Activated T-helper 1 cell treated with anti-CD3 and anti-CD28 coated beads, Interleukin-12 subunit alpha, Interleukin-12 subunit beta, Interleukin-2, Interleukin-4 antibody, amounts not matched to agents 30 ng/mL and 10 ng/mL and 1 ng/mL, durations not matched to agents 14 hours and 24 hours and 36 hours (primary cell): ENCODE measurements at regions of chr16 and their contacts with region 1.

Region 1: DNA sequence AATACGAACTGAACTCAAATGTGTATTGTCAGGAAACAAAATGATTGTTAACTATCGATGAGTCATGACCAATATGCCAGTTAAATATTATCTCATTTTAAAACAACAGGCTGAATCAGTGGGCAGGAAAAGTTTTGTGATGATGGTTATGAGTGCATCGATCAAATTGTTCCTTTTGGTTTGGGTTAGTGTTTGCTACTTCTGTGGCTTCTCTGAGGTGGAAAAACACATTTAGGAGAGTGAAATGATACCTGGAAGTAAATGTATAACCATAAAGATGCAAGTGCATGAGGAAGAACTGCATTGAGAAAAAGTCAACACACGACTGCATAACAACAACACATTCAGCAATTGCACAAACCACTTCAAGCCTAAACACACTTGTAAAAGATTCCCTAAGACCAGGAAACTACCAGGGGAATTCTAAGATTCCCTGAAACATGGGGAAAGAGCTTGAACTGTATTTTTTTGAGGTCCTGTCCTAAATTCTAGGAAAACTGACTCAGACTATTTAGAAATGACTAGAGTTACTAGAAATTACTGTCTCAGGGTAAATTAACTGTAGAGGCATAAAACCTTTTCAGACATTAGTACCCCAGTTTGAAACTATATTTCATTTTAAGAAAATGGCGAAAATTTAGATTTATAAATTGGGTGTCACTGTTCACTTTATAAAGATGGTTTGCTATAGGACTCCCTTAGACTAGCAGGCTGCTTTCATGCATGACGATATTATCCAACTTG is 44.8 kb downstream of the CDYL2 start:
- DNase-seq: no peak
- H3K4me3 Mint-ChIP-seq: peak overlapping the region; percentile 23
- H3K27ac Mint-ChIP-seq: peak overlapping the region; percentile 67
- H3K4me1 Mint-ChIP-seq: peaks cover 44% of the 10 kb centered on the region
- H3K27me3 Mint-ChIP-seq: no peaks in the 10 kb centered on the region

Region 2: DNA sequence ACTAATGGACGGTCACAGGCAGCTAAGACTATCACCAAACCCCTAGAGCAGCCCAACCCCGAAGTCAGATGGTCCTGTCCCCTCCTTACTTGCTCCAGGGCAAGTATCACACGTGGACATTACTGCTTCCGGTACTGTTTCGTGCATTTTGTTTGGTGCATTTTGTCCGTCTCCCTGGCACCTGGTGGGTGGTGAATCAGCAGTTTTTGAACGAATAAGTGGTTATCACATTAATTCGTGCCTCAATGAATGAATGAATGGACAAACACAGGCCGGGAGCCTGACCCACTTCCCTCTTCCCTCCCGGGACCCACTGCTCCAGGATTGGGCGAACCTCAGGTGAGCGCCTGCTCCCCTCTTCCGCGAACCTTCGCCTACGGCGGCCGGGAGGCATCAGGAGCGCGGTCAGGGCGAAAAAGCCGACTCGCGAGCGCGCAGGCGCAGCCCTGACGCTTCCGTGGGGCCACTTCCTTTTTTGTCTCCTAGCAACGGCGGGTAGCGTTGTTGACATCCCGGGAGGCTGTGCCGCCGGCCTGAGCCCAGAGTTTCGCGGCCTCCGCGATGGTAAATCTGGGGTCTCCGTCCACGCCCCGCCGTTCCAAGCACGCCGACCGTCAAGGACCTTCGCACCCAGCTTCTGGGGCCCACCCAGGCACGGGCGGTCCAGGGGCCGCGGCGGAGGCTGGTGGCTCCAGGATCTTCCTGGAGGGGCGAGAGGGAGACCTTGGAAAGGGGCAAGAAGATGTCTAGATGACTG is 218.9 kb before region 1 on chr16 and contains the start of gene DYNLRB2:
- intact Hi-C with region 1: loop called (anchors 1 kb)
- DNase-seq: peak; percentile 92
- H3K4me3 Mint-ChIP-seq: peak within 1 kb of the TSS; percentile 87
- H3K27ac Mint-ChIP-seq: peak within 1 kb of the TSS; percentile 96
- H3K4me1 Mint-ChIP-seq: peaks cover 38% of the 10 kb centered on the region
- H3K27me3 Mint-ChIP-seq: peaks cover 2% of the 10 kb centered on the region
- total RNA-seq, gene DYNLRB2: not detected in 2 replicates

Region 3: DNA sequence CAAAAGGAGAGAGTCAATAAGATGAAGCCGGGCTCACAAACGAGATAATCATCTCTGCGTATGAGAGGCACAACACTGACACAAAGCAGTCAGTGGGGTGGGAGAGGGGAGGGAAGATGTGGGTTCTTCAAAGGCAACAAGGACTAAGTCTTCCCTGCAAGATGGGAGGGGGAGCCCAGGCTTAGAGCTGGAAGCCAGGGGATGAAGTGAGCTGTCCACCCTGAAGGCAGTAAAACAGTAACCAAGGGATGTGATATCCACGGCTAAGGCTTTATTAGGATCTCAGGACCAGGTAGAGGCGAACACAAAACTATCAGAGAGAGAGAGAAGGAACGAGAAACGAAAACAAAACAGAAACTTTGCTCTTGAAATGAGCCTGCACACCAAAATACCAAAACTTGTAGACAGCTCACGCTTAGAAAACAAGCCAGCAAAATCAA is 102.9 kb before region 1 on chr16:
- intact Hi-C with region 1: loop called (anchors 1 kb)
- DNase-seq: peak; percentile 42
- H3K4me3 Mint-ChIP-seq: peak overlapping the region; percentile 85
- H3K27ac Mint-ChIP-seq: peak overlapping the region; percentile 91
- H3K4me1 Mint-ChIP-seq: peaks cover 43% of the 10 kb centered on the region
- H3K27me3 Mint-ChIP-seq: no peaks in the 10 kb centered on the region

Region 4: GRCh38 chr16:80693553-80693952 is 66.0 kb before region 1 on chr16:
- intact Hi-C with region 1: loop called (anchors 1 kb)
- DNase-seq: no peak
- H3K4me3 Mint-ChIP-seq: no peak overlapping the region
- H3K27ac Mint-ChIP-seq: peak overlapping the region; percentile 71
- H3K4me1 Mint-ChIP-seq: peaks cover 83% of the 10 kb centered on the region
- H3K27me3 Mint-ChIP-seq: peaks cover 1% of the 10 kb centered on the region

Region 5: DNA sequence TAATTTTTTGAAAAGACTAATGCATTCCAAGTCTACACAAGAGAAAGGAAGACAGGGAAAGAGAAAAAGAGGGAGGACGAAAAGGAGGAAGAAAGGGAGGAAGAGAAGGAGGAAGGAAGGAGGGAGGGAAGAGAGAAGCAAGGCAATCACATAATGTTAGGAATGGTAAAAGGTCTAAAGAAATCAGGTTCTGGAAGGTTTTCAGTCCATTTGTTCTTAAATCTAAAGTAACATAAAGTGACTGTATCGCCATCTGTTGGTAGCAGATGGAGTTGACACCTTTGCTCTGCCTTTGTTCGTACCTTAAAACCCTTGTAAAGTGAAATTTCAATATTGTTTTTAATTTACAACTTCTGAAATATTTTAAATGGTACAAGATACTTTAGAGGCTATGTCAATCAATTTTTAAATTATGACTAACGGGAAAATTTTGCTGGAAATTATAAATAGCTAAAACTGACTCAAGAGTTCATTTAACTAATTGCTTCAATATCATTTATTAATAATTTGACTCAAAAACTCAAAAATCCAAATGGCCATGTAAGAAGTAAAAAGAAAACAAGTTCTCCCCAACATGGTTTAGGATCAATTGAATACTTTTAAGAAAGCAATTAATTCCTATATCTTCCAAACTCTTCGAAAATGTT is 65.2 kb after region 1 on chr16:
- intact Hi-C with region 1: loop called (anchors 5 kb)
- DNase-seq: no peak
- H3K4me3 Mint-ChIP-seq: no peak overlapping the region
- H3K27ac Mint-ChIP-seq: no peak overlapping the region
- H3K4me1 Mint-ChIP-seq: peaks cover 7% of the 10 kb centered on the region
- H3K27me3 Mint-ChIP-seq: peaks cover 15% of the 10 kb centered on the region